ENCODE measurements at regions of chr4 and their contacts with region 1.

Region 1: GRCh38 chr4:128354205-128354821 is 66.7 kb upstream of the PGRMC2 start:
- DNase-seq: peak; percentile 17 to 88
- ATAC-seq: peak; percentile 80 to 84
- H3K4me3 ChIP-seq: no peak overlapping the region
- H3K27ac ChIP-seq: peak overlapping the region; percentile 95 to 97
- H3K4me1 ChIP-seq: peaks cover 92% of the 10 kb centered on the region
- CTCF ChIP-seq: no peak
- EP300 ChIP-seq: peak; percentile 79 to 88; a peak in 4 of 5 replicates
- POLR2A ChIP-seq: no peak
- RAD21 ChIP-seq: peak in 1 of 2 experiments; percentile 42; a peak in 3 of 5 replicates

Region 2: DNA sequence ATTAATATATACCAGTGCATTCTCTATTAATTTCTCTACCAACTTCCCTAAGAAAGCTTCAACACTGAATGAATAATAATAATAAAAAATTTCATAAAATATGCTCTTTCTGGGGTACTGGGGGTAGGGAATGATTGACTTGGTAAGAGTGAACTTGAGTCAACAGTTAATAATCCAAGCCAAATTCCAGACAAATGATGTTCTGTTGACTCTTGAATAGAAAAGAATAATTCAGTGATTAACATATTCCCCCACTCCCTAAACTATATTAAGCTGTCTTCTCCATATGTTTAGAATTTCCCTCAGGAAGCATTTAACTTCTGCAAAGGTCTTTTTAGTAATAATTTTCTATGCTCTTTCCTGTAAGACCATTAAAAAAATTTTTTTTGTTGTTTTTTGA is 79.0 kb before region 1 on chr4:
- CTCF ChIA-PET with region 1: no interaction called
- POLR2A ChIA-PET with region 1: no interaction called
- DNase-seq: peak in 1 of 2 experiments; percentile 30
- ATAC-seq: peak in 1 of 2 experiments; percentile 63; a peak in 2 of 6 replicates
- H3K4me3 ChIP-seq: no peak overlapping the region
- H3K27ac ChIP-seq: peak overlapping the region; percentile 46 to 76; a peak in 5 of 6 replicates
- H3K4me1 ChIP-seq: peaks cover 71% of the 10 kb centered on the region
- CTCF ChIP-seq: no peak
- EP300 ChIP-seq: no peak
- POLR2A ChIP-seq: no peak
- RAD21 ChIP-seq: no peak

Region 3: GRCh38 chr4:128287871-128288688 is 66.2 kb before region 1 on chr4:
- CTCF ChIA-PET with region 1: interaction called, 3 read pairs
- POLR2A ChIA-PET with region 1: interaction called, 16 read pairs
- DNase-seq: peak; percentile 83 to 98
- ATAC-seq: peak; percentile 80 to 87
- H3K4me3 ChIP-seq: peak overlapping the region; percentile 79
- H3K27ac ChIP-seq: peak overlapping the region; percentile 94 to 99
- H3K4me1 ChIP-seq: peaks cover 24% of the 10 kb centered on the region
- CTCF ChIP-seq: no peak
- EP300 ChIP-seq: no peak
- POLR2A ChIP-seq: peak; percentile 75
- RAD21 ChIP-seq: peak in 1 of 2 experiments; percentile 38; a peak in 3 of 5 replicates

Region 4: GRCh38 chr4:128322995-128323394 is 31.3 kb before region 1 on chr4:
- CTCF ChIA-PET with region 1: no interaction called
- POLR2A ChIA-PET with region 1: interaction called, 15 read pairs
- DNase-seq: peak; percentile 4 to 75
- ATAC-seq: peak; percentile 89 to 94
- H3K4me3 ChIP-seq: no peak overlapping the region
- H3K27ac ChIP-seq: peak overlapping the region; percentile 88 to 92
- H3K4me1 ChIP-seq: peaks cover 36% of the 10 kb centered on the region
- CTCF ChIP-seq: no peak
- EP300 ChIP-seq: no peak
- POLR2A ChIP-seq: no peak
- RAD21 ChIP-seq: no peak

Region 5: GRCh38 chr4:128653517-128654444 is 299.5 kb after region 1 on chr4:
- CTCF ChIA-PET with region 1: no interaction called
- POLR2A ChIA-PET with region 1: no interaction called
- DNase-seq: no peak
- ATAC-seq: peak in 1 of 2 experiments; percentile 80; a peak in 3 of 6 replicates
- H3K4me3 ChIP-seq: no peak overlapping the region
- H3K27ac ChIP-seq: peak overlapping the region; percentile 19 to 49; a peak in 4 of 6 replicates
- H3K4me1 ChIP-seq: peaks cover 30% of the 10 kb centered on the region
- CTCF ChIP-seq: no peak
- EP300 ChIP-seq: no peak
- POLR2A ChIP-seq: no peak
- RAD21 ChIP-seq: no peak